Activated CD4-positive, alpha-beta T cell treated with anti-CD3 and anti-CD28 coated beads, Interleukin-2, amount 10 ng/mL, durations not matched to agents 24 days and 14 days (primary cell): ENCODE measurements at regions of chr20 and their contacts with region 1.

Region 1: GRCh38 chr20:43983359-43983758 is 68.7 kb downstream of the TOX2 start:
- DNase-seq: peak; percentile 76
- H3K4me3 Mint-ChIP-seq: no peak overlapping the region
- H3K27ac Mint-ChIP-seq: no peak overlapping the region
- H3K4me1 Mint-ChIP-seq: peaks cover 14% of the 10 kb centered on the region
- H3K27me3 Mint-ChIP-seq: peaks cover 16% of the 10 kb centered on the region

Region 2: DNA sequence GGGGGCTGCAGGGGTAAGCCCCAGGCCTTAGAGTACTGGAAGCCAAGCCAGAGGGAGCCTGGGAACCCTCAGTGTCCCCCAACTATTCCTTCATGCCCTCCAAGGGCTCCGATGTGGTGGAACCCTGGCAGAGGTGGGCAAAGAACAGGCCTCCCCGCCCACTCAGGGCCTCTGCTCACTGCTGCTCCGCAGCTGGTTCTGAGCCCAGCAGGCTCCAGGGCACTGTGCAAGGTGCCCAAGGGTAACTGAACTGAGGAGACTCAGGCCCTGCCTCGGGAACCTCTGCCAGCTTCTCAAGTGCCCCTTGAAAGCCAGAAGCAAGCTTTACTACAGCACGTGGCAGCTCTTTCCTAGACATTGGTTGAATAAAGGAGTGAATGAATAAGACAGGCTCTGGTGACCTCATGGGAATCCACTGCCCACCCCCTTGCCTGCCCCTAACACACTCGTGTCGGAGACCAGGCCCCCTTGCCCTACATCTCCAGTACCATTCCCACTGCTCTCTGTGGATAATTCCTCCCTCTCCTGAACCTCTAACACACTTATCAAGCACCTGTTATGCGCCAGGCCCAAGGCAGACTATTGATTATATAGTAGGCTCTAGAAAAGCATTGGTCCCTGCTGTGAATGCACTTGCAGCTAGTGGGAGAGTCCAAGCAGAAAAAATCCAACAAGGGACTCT is 13.7 kb before region 1 on chr20:
- intact Hi-C with region 1: no loop called
- DNase-seq: no peak
- H3K4me3 Mint-ChIP-seq: no peak overlapping the region
- H3K27ac Mint-ChIP-seq: no peak overlapping the region
- H3K4me1 Mint-ChIP-seq: peaks cover 11% of the 10 kb centered on the region
- H3K27me3 Mint-ChIP-seq: peaks cover 15% of the 10 kb centered on the region

Region 3: DNA sequence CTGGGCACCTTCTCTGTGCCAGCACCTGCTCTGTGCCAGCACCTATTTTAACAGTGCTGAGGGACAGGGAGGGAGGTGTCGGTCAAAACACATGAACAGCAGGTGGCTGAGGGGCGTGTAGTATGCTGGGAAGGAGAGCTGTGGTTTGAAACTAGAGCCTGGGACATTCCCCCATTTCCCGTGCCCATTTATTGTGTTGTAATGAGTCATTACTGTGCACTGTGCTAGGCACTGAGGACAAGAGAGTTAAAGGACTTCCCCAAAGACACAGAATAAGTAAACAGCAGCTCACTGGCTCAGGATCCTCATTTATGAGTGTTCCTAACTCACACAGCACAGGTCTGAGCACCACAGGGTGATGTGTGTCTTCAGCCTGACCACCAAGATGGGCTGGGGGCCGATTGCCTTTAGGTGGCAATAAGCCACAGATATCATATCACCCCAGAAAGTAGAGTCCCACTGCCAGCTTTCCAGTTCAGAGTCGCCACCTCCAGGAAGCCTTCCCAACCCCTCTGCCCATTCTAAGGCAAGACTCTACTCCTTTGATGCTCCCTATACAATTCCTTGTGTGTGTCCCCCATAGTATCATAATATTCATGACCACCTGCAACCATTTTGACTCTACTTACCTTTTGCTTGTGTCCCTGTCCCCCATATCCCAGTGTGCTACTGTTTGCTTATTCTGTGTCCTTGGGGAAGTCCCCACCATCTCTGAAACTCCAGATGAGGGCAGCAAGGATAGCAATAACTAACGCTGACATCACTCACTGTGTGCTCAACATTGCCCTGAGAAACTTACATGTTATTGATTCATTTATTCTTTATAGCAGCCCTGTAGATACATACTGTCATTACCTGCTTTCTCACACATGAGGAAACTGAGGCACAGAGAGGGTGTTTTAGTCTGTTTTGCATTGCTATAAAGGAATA is 18.6 kb after region 1 on chr20:
- intact Hi-C with region 1: loop called (anchors 2 kb)
- DNase-seq: no peak
- H3K4me3 Mint-ChIP-seq: no peak overlapping the region
- H3K27ac Mint-ChIP-seq: no peak overlapping the region
- H3K4me1 Mint-ChIP-seq: peaks cover 13% of the 10 kb centered on the region
- H3K27me3 Mint-ChIP-seq: peaks cover 34% of the 10 kb centered on the region